ENCODE measurements at regions of chr7 and their contacts with region 1.

Region 1: DNA sequence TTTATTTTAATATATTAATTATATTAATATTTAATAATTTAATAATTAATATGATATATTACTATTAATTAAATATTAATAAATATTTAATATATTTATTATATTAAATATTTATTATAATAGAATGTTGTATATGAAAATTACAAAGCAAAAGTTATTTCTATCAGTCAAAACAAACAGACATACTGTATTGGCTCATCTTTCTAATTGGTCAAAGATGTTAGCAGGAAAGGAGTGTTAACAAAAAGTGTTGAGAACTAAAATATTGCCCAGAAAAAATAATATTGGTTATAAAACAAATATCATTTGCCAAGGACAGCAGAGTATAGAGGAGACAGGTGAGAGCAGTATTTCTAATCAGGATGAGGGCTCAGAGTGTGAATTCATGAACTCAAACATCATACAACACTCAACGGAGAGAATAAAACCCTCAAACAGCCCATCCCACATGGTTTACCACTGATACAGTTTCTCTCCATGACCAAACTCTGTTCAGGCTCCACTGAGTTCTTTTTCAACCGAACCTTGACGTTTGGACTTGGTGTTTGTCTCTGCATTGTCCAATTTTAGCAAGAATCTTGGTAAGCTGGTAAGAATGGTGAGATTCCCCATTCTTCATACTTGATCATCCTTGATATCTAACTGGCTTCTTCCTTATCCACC is 58.0 kb downstream of the TSPAN12 start:
- DNase-seq: no peak
- ATAC-seq: no peak
- H3K4me3 ChIP-seq: no peak overlapping the region
- H3K27ac ChIP-seq: no peak overlapping the region
- H3K4me1 ChIP-seq: no peaks in the 10 kb centered on the region
- H3K27me3 ChIP-seq: no peaks in the 10 kb centered on the region
- CTCF ChIP-seq: no peak
- POLR2A ChIP-seq: no peak

Region 2: DNA sequence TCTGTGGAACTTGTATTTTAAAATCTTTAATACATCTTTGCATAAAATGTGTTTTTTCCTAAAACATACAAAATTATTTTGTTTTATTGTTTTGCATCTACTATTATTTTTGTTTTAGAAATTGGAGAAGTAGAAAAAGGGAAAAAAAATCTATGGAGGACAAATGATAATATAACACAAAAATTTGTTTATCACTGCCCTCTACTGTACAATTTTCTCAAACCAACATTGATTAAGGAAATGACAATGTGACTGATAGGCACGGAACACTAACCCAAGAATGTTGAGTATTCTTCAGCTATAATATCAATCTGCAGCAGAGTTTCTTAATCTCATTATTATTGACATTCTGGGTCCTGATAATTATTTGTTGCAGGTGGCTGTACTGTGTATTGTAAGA is 141.1 kb after region 1 on chr7:
- in situ Hi-C with region 1: loop called (anchors 5 to 25 kb)
- intact Hi-C with region 1: loop called (anchors 5 kb)
- DNase-seq: no peak
- ATAC-seq: no peak
- H3K4me3 ChIP-seq: no peak overlapping the region
- H3K27ac ChIP-seq: peak overlapping the region in 2 of 4 donors; percentile 37 to 59
- H3K4me1 ChIP-seq: no peaks in the 10 kb centered on the region
- H3K27me3 ChIP-seq: no peaks in the 10 kb centered on the region
- CTCF ChIP-seq: peak in 3 of 5 experiments; percentile 21 to 31 (median 27)
- POLR2A ChIP-seq: no peak

Region 3: GRCh38 chr7:121113288-121113687 is 313.3 kb after region 1 on chr7:
- in situ Hi-C with region 1: loop called (anchors 5 to 25 kb)
- intact Hi-C with region 1: no loop called
- DNase-seq: no peak
- ATAC-seq: no peak
- H3K4me3 ChIP-seq: no peak overlapping the region
- H3K27ac ChIP-seq: peak overlapping the region in 1 of 4 donors; percentile 14
- H3K4me1 ChIP-seq: no peaks in the 10 kb centered on the region
- H3K27me3 ChIP-seq: no peaks in the 10 kb centered on the region
- CTCF ChIP-seq: no peak
- POLR2A ChIP-seq: no peak

Region 4: GRCh38 chr7:121313793-121314676 is 514.1 kb after region 1 on chr7:
- in situ Hi-C with region 1: no loop called
- intact Hi-C with region 1: no loop called
- DNase-seq: no peak
- ATAC-seq: no peak
- H3K4me3 ChIP-seq: no peak overlapping the region
- H3K27ac ChIP-seq: no peak overlapping the region
- H3K4me1 ChIP-seq: no peaks in the 10 kb centered on the region
- H3K27me3 ChIP-seq: no peaks in the 10 kb centered on the region
- CTCF ChIP-seq: no peak
- POLR2A ChIP-seq: no peak

Region 5: DNA sequence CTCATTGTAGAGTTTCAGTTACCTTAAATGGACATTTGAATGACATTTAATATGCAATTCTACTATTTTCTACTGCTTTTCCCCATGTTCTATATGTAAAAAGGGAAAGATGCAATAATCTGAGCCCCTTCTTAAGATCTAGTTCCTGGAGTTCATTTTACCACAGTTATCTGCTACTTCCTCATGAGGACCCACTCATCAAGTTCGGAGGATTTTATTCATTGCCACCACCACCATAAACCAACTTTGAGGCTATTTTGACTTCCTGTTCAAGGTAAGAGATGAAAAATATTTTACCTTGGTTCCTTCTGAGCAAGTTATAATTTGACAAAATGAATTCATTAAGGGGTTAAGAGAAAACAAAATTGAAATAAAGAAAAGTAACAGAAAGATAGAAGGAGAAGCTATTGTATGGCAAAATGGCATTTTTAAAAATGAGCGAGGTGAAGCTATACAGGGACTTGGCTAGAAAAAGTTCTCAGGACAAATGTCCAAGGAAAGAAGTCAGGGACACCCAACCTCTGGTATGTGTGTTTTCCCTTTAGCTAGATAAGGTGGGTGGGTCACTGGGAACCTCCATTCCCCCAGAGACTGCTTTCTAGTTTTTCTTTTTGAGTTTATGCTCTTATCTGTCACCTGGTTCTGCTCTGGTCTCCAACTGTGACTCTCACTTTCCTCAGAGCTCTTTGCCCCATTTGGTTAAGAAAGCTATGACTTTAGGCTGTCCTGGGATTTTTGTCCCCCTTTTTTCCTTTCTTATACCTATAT is 611.1 kb after region 1 on chr7:
- in situ Hi-C with region 1: no loop called
- intact Hi-C with region 1: no loop called
- DNase-seq: no peak
- ATAC-seq: no peak
- H3K4me3 ChIP-seq: no peak overlapping the region
- H3K27ac ChIP-seq: no peak overlapping the region
- H3K4me1 ChIP-seq: no peaks in the 10 kb centered on the region
- H3K27me3 ChIP-seq: no peaks in the 10 kb centered on the region
- CTCF ChIP-seq: no peak
- POLR2A ChIP-seq: no peak